Breast epithelium (tissue), 4 donors: ENCODE measurements at regions of chr7 and their contacts with region 1.

Region 1: GRCh38 chr7:89813081-89813480 is 341.2 kb upstream of the STEAP1 start:
- DNase-seq: no peak
- H3K4me3 ChIP-seq: no peak overlapping the region
- H3K27ac ChIP-seq: no peak overlapping the region
- H3K4me1 ChIP-seq: no peaks in the 10 kb centered on the region
- H3K27me3 ChIP-seq: no peaks in the 10 kb centered on the region
- CTCF ChIP-seq: no peak
- POLR2A ChIP-seq: no peak

Region 2: GRCh38 chr7:89800761-89801160 is 12.3 kb before region 1 on chr7:
- intact Hi-C with region 1: loop called (anchors 1 kb)
- DNase-seq: no peak
- H3K4me3 ChIP-seq: no peak overlapping the region
- H3K27ac ChIP-seq: no peak overlapping the region
- H3K4me1 ChIP-seq: no peaks in the 10 kb centered on the region
- H3K27me3 ChIP-seq: no peaks in the 10 kb centered on the region
- CTCF ChIP-seq: no peak
- POLR2A ChIP-seq: no peak